Activated CD4-positive, alpha-beta T cell treated with anti-CD3 and anti-CD28 coated beads, Interleukin-2, amount 10 ng/mL, durations not matched to agents 24 days and 14 days (primary cell): ENCODE measurements at regions of chr19 and their contacts with region 1.

Region 1: GRCh38 chr19:40598121-40598917 is 2.9 kb upstream of the LTBP4 start:
- DNase-seq: peak; percentile 96
- H3K4me3 Mint-ChIP-seq: peak overlapping the region; percentile 55
- H3K27ac Mint-ChIP-seq: no peak overlapping the region
- H3K4me1 Mint-ChIP-seq: peaks cover 49% of the 10 kb centered on the region
- H3K27me3 Mint-ChIP-seq: peaks cover 44% of the 10 kb centered on the region

Region 2: DNA sequence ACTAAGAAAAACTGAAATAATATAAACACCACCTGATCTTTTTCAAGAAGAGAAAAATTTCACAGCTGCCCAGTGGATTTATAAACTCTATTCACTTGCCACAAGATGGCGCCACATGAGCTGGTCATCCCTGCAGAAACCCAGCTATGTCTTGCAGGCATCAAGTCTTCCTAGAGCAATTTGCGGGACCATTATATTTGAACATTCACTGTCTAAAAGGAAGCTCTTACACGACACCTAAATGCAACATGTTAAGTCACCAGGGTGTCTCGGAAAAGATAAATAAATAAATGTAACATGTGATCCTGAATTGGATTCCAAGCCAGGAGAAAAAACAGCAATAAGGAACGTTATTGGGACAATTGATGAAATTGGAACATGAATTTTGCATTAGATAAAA is 292.9 kb before region 1 on chr19:
- intact Hi-C with region 1: loop called (anchors 10 kb)
- DNase-seq: peak; percentile 92
- H3K4me3 Mint-ChIP-seq: no peak overlapping the region
- H3K27ac Mint-ChIP-seq: no peak overlapping the region
- H3K4me1 Mint-ChIP-seq: peaks cover 3% of the 10 kb centered on the region
- H3K27me3 Mint-ChIP-seq: peaks cover 1% of the 10 kb centered on the region

Region 3: DNA sequence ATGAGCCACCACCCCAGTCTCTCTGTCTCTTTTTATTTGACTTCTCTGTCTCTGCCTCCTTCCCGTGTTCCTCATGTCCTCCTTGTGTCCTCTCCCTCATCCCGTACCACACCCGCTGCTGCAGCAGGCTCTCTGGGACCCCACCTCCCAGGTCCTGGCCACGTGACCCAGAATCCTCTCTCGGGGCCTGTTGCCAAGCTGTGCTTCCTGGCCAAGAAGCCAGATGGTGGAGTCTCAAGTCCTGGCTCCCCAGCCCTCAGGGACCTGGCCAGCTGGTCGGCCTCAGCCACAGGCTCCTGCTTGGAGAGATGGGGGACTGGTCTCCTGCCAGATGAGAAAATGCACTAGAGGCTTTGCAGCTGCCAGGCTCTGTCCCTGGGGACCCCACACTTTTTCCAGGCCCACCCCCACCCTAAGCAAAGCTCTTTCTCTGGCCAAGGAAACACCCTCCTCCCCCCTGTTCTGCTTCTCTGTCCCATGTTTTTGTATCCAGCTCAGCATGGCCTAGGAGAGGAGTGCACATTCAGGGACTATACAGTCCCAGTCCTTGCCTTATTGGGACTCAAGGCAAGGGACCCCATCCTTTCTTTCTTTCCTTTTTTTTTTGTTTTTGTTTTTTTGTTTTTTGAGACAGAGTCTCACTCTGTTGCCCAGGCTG is 56.0 kb before region 1 on chr19:
- intact Hi-C with region 1: loop called (anchors 1 kb)
- DNase-seq: no peak
- H3K4me3 Mint-ChIP-seq: no peak overlapping the region
- H3K27ac Mint-ChIP-seq: no peak overlapping the region
- H3K4me1 Mint-ChIP-seq: no peaks in the 10 kb centered on the region
- H3K27me3 Mint-ChIP-seq: peaks cover 8% of the 10 kb centered on the region

Region 4: GRCh38 chr19:40549007-40549708 is 49.2 kb before region 1 on chr19:
- intact Hi-C with region 1: loop called (anchors 1 kb)
- DNase-seq: peak; percentile 92
- H3K4me3 Mint-ChIP-seq: peak overlapping the region; percentile 19
- H3K27ac Mint-ChIP-seq: no peak overlapping the region
- H3K4me1 Mint-ChIP-seq: peaks cover 9% of the 10 kb centered on the region
- H3K27me3 Mint-ChIP-seq: peaks cover 45% of the 10 kb centered on the region

Region 5: GRCh38 chr19:40659566-40659965 is 61.2 kb after region 1 on chr19:
- intact Hi-C with region 1: no loop called
- DNase-seq: no peak
- H3K4me3 Mint-ChIP-seq: no peak overlapping the region
- H3K27ac Mint-ChIP-seq: no peak overlapping the region
- H3K4me1 Mint-ChIP-seq: peaks cover 13% of the 10 kb centered on the region
- H3K27me3 Mint-ChIP-seq: peaks cover 6% of the 10 kb centered on the region